Ascending aorta (tissue), 2 donors: ENCODE measurements at regions of chr1 and their contacts with region 1.

Region 1: DNA sequence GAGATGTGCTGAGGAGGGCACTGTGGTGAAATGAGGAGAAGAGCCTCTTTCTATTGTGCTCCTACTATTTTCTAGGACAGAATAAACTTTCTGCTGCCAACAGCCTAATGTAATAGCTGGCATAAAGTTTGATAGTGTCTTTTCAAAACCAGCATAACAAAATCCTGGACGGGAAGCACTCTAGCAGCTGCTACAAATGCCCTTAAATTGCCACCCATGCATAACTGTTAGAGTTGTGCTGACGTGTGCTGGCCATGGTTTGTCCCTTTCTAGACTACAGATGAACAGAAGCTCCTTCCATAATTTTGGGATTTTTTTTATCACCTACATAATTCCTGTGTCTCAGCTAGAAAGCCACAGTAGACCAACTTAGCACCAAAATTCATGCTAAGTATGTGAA is 88.5 kb upstream of the DEPDC1 start:
- DNase-seq: no peak
- H3K4me3 ChIP-seq: no peak overlapping the region
- H3K27ac ChIP-seq: no peak overlapping the region
- H3K4me1 ChIP-seq: no peaks in the 10 kb centered on the region
- H3K27me3 ChIP-seq: no peaks in the 10 kb centered on the region
- CTCF ChIP-seq: no peak

Region 2: GRCh38 chr1:68481041-68481440 is 104.3 kb before region 1 on chr1:
- intact Hi-C with region 1: loop called (anchors 10 kb)
- DNase-seq: no peak
- H3K4me3 ChIP-seq: no peak overlapping the region
- H3K27ac ChIP-seq: no peak overlapping the region
- H3K4me1 ChIP-seq: no peaks in the 10 kb centered on the region
- H3K27me3 ChIP-seq: no peaks in the 10 kb centered on the region
- CTCF ChIP-seq: no peak